ENCODE measurements at regions of chr19 and their contacts with region 1.

Region 1: DNA sequence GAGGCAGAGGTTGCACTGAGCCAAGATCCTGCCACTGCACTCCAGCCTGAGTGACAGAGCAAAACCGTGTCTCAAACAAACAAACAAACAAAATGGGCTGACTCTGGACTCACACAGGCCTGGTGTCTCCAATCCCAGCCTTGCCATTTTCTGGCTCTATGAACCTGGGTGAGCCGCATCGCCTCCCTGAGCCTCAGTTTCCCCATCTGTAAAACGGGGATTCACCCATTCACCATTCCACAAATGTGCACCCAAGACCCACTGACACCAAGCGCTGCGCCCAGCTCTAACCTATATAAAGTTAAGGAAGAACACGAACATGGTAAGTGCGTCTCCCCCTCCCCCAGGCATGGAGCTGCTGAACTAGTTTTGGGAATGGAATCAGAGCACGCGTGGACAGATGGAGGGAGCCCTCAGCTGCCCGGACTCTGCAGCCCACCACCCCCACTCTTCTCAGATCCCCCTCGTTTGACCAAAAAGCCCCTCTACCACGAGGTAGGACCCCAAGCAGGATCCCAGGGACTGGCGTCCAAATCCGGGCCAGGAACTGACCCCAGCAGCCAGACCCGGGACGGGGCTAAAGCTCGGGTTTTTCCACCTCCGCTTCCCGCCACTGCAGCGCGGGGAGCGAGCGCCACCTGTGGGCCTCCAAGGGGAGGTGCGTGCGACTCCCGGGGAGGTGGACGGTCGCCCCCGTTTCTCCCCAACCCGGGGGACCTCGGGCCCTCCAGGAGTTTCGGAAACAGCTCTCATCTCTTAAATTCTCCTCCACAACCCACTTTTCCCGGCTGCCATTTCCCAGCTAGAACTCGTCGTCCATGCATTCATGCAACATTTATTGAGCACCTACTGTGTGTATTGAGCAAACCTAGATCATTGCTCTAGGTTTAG is 33.0 kb upstream of the ADGRE5 start:
- DNase-seq: peak; percentile 40 to 62 (median 55)
- H3K4me3 ChIP-seq: peak overlapping the region in 5 of 7 experiments; percentile 26 to 68 (median 48)
- H3K27ac ChIP-seq: no peak overlapping the region
- H3K4me1 ChIP-seq: peaks cover 0 to 8% (median 7%) of the 10 kb centered on the region in 4 experiments
- H3K27me3 ChIP-seq: peaks cover 0 to 2% (median 0%) of the 10 kb centered on the region in 5 experiments

Region 2: GRCh38 chr19:14198384-14199376 is 149.6 kb before region 1 on chr19:
- CTCF ChIA-PET with region 1: interaction called, 73 read pairs
- POLR2A ChIA-PET with region 1: no interaction called
- DNase-seq: peak in 2 of 3 donors; percentile 70 to 77
- H3K4me3 ChIP-seq: no peak overlapping the region
- H3K27ac ChIP-seq: no peak overlapping the region
- H3K4me1 ChIP-seq: peaks cover 0 to 12% (median 8%) of the 10 kb centered on the region in 4 experiments
- H3K27me3 ChIP-seq: no peaks in the 10 kb centered on the region

Region 3: GRCh38 chr19:14218620-14219330 is 129.5 kb before region 1 on chr19:
- CTCF ChIA-PET with region 1: interaction called, 11 read pairs
- POLR2A ChIA-PET with region 1: no interaction called
- DNase-seq: no peak
- H3K4me3 ChIP-seq: no peak overlapping the region
- H3K27ac ChIP-seq: no peak overlapping the region
- H3K4me1 ChIP-seq: peaks cover 0 to 5% (median 0%) of the 10 kb centered on the region in 4 experiments
- H3K27me3 ChIP-seq: no peaks in the 10 kb centered on the region

Region 4: DNA sequence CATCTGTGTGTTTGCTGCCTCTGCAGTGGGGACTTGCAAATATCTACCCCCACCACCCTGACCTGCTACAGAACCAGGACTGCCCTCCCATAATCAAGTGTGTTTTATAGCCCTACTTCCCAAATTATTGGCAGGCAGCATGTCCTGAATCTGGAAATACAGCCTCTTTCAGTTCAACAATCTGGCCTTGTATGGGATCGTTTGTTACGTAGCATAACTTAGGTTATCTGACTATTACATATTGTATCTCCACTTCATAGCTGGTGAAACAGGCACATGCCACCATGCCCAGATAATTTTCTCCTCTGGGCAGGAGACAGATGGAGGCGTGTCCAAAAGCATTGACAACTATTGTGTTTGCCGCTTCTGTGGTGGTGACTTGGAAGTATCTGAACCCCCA is 75.6 kb before region 1 on chr19:
- CTCF ChIA-PET with region 1: no interaction called
- POLR2A ChIA-PET with region 1: no interaction called
- DNase-seq: no peak
- H3K4me3 ChIP-seq: no peak overlapping the region
- H3K27ac ChIP-seq: no peak overlapping the region
- H3K4me1 ChIP-seq: peaks cover 1 to 18% (median 14%) of the 10 kb centered on the region in 4 experiments
- H3K27me3 ChIP-seq: no peaks in the 10 kb centered on the region

Region 5: DNA sequence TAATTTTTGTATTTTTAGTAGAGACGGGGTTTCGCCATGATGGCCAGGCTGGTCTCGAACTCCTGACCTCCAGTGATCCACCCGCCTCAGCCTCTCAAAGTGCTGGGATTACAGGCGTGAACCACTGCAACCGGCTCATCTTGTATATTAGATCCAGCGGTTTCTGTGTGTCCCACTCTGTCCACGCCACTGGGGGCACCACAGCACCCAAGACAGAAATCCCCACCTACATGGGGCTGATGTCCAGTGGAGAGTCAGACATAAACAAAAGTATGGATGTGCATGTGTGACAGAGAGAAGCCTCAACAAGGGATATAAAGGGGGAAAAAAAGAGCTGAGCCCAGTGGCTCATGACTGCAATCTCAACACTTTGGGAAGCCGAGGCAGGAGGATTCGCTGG is 32.8 kb before region 1 on chr19:
- CTCF ChIA-PET with region 1: no interaction called
- POLR2A ChIA-PET with region 1: no interaction called
- DNase-seq: no peak
- H3K4me3 ChIP-seq: no peak overlapping the region
- H3K27ac ChIP-seq: no peak overlapping the region
- H3K4me1 ChIP-seq: peaks cover 0 to under 1% (median 0%) of the 10 kb centered on the region in 4 experiments
- H3K27me3 ChIP-seq: no peaks in the 10 kb centered on the region

Region 6: DNA sequence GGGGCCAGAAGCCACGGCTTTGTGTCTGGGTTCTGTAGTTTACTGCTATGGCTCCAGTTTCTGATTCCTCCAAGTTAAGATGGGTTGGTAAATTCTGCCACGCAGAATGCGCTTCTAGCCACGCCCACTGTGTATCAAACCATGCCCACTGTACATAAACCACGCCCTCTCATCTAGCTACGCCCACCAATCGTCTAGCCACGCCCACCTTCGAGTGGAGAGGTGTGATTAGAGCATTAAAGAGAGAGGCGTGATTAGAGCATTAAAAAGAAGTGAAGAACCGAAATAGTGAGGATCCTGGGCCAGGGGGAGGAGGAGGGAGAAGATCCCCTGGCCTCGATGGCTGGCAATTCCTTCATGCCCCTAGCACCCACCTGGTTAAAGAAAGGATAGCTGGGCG is 10.7 kb before region 1 on chr19:
- CTCF ChIA-PET with region 1: interaction called, 25 read pairs
- POLR2A ChIA-PET with region 1: no interaction called
- DNase-seq: peak; percentile 57 to 81 (median 79)
- H3K4me3 ChIP-seq: no peak overlapping the region
- H3K27ac ChIP-seq: no peak overlapping the region
- H3K4me1 ChIP-seq: peaks cover 0 to 8% (median 7%) of the 10 kb centered on the region in 4 experiments
- H3K27me3 ChIP-seq: no peaks in the 10 kb centered on the region